Endothelial cell of umbilical vein (primary cell): ENCODE measurements at regions of chr22 and their contacts with region 1.

Region 1: DNA sequence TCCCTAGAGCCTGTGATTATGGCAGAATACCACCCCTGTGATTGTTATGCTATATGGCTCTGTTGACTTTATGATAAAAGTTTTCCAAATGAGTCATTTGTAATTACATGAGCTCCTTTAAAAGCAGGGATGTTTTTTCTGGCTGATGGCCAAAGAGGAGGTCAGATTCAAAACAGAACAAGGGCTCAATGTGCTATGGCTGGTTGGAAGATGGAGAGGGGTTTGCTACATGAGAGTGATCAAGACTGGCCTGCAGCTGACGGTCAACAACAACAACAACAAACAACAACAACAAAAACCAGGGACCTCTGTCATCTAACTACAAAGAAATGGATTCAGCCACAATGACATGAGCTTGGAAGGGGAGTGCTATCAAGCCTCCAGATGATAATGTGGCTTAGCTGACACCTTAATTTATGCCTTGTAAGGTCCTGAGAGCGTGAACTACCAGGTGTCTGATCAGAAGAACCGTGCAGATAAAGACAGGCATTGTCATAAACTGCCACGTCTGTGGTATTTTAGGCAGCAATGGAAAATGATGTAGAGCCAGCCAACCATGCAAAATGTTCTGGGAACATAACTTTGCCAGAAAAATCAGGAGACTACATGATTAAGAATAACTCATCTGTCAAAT is 47.2 kb downstream of the PIWIL3 start:
- DNase-seq: peak; percentile 98
- H3K4me3 ChIP-seq: no peak overlapping the region
- H3K27ac ChIP-seq: peak overlapping the region; percentile 27
- H3K4me1 ChIP-seq: peaks cover 42% of the 10 kb centered on the region
- H3K27me3 ChIP-seq: peaks cover 3 to 6% of the 10 kb centered on the region in 2 experiments
- CTCF ChIP-seq: no peak
- POLR2A ChIP-seq: no peak

Region 2: GRCh38 chr22:24230911-24231656 is 496.3 kb before region 1 on chr22:
- CTCF ChIA-PET with region 1: no interaction called
- POLR2A ChIA-PET with region 1: no interaction called
- dilution Hi-C with region 1: no loop called
- intact Hi-C with region 1: no loop called
- DNase-seq: peak; percentile 18
- H3K4me3 ChIP-seq: no peak overlapping the region
- H3K27ac ChIP-seq: no peak overlapping the region
- H3K4me1 ChIP-seq: no peaks in the 10 kb centered on the region
- H3K27me3 ChIP-seq: no peaks in the 10 kb centered on the region
- CTCF ChIP-seq: peak; percentile 21 to 38
- POLR2A ChIP-seq: no peak

Region 3: GRCh38 chr22:24695561-24696511 is 31.5 kb before region 1 on chr22:
- CTCF ChIA-PET with region 1: interaction called, 4 read pairs
- POLR2A ChIA-PET with region 1: interaction called, 3 read pairs
- dilution Hi-C with region 1: no loop called
- intact Hi-C with region 1: loop called (anchors 5 kb)
- DNase-seq: no peak
- H3K4me3 ChIP-seq: no peak overlapping the region
- H3K27ac ChIP-seq: no peak overlapping the region
- H3K4me1 ChIP-seq: peaks cover 7% of the 10 kb centered on the region
- H3K27me3 ChIP-seq: no peaks in the 10 kb centered on the region
- CTCF ChIP-seq: no peak
- POLR2A ChIP-seq: no peak

Region 4: DNA sequence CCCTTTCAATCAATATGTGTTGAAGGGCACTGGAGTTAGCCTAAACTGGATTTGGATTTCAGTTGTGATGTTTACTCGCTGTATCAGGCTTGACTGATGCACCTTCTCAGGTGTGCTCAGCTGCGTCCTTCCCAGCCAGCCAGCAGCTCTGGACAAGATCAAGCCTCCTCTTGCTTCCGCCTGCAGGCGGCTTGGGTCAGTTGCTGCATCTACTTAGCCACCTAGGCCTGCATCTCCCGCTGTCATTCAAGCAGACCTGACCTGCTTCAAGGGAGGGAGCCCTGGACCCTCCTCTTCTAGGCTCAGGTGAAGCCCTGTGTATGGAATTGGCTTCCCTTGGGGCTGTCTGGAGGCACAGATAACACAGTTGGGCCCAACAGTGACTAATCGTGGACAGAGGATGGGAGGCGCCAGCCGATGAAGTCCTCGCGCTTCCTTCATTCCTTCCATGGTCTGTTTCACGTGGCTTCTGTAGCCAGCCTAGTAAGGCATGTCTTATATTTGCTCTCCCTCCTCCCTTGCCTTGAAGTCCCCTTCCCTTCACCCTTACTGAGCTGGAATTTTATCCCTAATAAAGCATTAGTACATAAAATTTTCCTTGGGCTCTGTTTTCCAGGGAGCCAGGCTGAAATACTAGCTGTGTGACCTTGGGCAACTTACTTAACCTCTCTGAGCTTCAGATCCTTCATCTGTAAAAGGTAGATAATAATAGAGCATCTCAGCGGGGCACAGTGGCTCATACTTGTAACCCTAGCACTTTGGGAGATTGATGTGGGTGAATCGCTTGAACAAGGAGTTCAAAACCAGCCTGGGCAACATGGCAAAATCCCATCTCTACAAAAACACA is 221.2 kb after region 1 on chr22:
- CTCF ChIA-PET with region 1: no interaction called
- POLR2A ChIA-PET with region 1: no interaction called
- dilution Hi-C with region 1: no loop called
- intact Hi-C with region 1: no loop called
- DNase-seq: no peak
- H3K4me3 ChIP-seq: no peak overlapping the region
- H3K27ac ChIP-seq: no peak overlapping the region
- H3K4me1 ChIP-seq: no peaks in the 10 kb centered on the region
- H3K27me3 ChIP-seq: peaks cover 0 to 9% of the 10 kb centered on the region in 2 experiments
- CTCF ChIP-seq: no peak
- POLR2A ChIP-seq: no peak